IMR-90 (cell line): ENCODE measurements at regions of chr7 and their contacts with region 1.

Region 1: DNA sequence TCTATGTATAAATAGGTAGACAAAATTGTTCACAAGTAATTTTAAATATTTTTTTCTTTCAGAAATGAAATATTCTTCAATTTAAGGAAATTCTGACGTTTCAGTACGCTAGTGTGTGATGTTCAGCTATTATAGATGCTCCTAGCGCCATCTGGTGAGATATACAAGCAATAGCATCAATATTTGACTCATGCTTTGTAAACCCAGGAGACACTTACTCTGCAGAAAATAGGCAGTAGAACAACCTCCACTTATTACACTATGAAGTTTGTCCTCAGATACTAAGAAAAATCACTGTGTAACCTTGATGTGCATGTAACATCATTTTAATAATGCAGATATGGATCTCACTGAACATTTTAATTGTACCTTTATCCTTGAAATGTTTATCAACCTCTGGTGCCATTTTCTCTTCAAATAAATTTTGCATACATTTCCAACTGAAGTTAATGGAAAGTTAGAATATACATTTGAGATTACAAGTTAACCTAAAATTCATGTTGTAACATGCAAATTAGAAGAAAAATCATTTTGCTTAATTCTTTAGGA is 151.5 kb upstream of the FAM3C start:
- DNase-seq: peak; percentile 78
- ATAC-seq: peak; percentile 88
- H3K4me3 ChIP-seq: no peak overlapping the region
- H3K27ac ChIP-seq: no peak overlapping the region
- H3K4me1 ChIP-seq: 0 out of 2 replicates have a peak, but pooled peaks cover 3% of the 10 kb centered on the region
- H3K27me3 ChIP-seq: peaks cover 4% of the 10 kb centered on the region
- CTCF ChIP-seq: peak; percentile 91
- POLR2A ChIP-seq: no peak
- RAD21 ChIP-seq: peak; percentile 88

Region 2: GRCh38 chr7:121126801-121127534 is 420.6 kb before region 1 on chr7:
- CTCF ChIA-PET with region 1: no interaction called
- POLR2A ChIA-PET with region 1: no interaction called
- dilution Hi-C with region 1: no loop called
- in situ Hi-C with region 1: loop called (anchors 10 kb)
- intact Hi-C with region 1: loop called (anchors 5 kb)
- DNase-seq: peak; percentile 27
- ATAC-seq: no peak
- H3K4me3 ChIP-seq: no peak overlapping the region
- H3K27ac ChIP-seq: no peak overlapping the region
- H3K4me1 ChIP-seq: no peaks in the 10 kb centered on the region
- H3K27me3 ChIP-seq: no peaks in the 10 kb centered on the region
- CTCF ChIP-seq: 0 out of 2 replicates have a peak, but pooled peaks have one; percentile 33
- POLR2A ChIP-seq: no peak
- RAD21 ChIP-seq: peak; percentile 42

Region 3: DNA sequence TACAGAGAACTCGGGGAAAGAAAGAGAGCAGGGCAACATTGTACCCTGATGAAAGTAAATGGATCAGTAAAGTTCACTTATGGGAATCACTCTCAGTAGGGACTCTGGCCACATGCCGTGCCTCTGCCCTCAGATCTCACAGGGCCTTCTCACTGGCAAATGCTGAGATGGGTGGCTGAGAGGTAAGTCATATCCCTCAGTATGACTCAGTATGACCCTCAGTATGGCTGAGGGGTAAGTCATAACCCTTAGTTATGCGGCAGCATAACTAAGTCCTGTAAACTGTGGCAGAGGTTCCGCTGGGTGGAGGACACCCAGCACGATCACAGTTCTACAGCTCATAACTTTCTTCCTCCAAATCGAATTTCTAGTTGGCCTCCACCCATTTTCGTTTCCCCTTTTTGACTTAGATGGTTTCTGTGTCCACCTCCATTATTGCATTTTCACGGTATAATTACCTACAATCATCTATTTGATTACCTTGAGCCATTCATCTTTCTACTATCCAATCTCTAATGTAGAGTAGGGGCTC is 245.3 kb before region 1 on chr7:
- CTCF ChIA-PET with region 1: no interaction called
- POLR2A ChIA-PET with region 1: no interaction called
- dilution Hi-C with region 1: no loop called
- in situ Hi-C with region 1: no loop called
- intact Hi-C with region 1: no loop called
- DNase-seq: peak; percentile 89
- ATAC-seq: peak; percentile 81
- H3K4me3 ChIP-seq: no peak overlapping the region
- H3K27ac ChIP-seq: peak overlapping the region; percentile 84; the same call in 1 of the 2 replicates
- H3K4me1 ChIP-seq: peaks cover 12% of the 10 kb centered on the region
- H3K27me3 ChIP-seq: no peaks in the 10 kb centered on the region
- CTCF ChIP-seq: no peak
- POLR2A ChIP-seq: peak; percentile 58; the same call in 1 of the 2 replicates
- RAD21 ChIP-seq: no peak

Region 4: GRCh38 chr7:121366852-121367431 is 180.7 kb before region 1 on chr7:
- CTCF ChIA-PET with region 1: interaction called, 6 read pairs
- POLR2A ChIA-PET with region 1: interaction called, 3 read pairs
- dilution Hi-C with region 1: loop called (anchors 25 kb)
- in situ Hi-C with region 1: loop called (anchors 5 kb)
- intact Hi-C with region 1: loop called (anchors 1 kb)
- DNase-seq: peak; percentile 48
- ATAC-seq: no peak; the same call in 1 of the 2 replicates
- H3K4me3 ChIP-seq: no peak overlapping the region
- H3K27ac ChIP-seq: no peak overlapping the region
- H3K4me1 ChIP-seq: peaks cover 5% of the 10 kb centered on the region
- H3K27me3 ChIP-seq: no peaks in the 10 kb centered on the region
- CTCF ChIP-seq: peak; percentile 83
- POLR2A ChIP-seq: no peak
- RAD21 ChIP-seq: peak; percentile 74

Region 5: GRCh38 chr7:121428855-121429489 is 118.6 kb before region 1 on chr7:
- CTCF ChIA-PET with region 1: no interaction called
- POLR2A ChIA-PET with region 1: no interaction called
- dilution Hi-C with region 1: no loop called
- in situ Hi-C with region 1: no loop called
- intact Hi-C with region 1: loop called (anchors 5 kb)
- DNase-seq: peak; percentile 10
- ATAC-seq: peak; percentile 89
- H3K4me3 ChIP-seq: no peak overlapping the region
- H3K27ac ChIP-seq: no peak overlapping the region
- H3K4me1 ChIP-seq: peaks cover 2% of the 10 kb centered on the region; the same call in 1 of the 2 replicates
- H3K27me3 ChIP-seq: peaks cover 2% of the 10 kb centered on the region
- CTCF ChIP-seq: no peak
- POLR2A ChIP-seq: no peak
- RAD21 ChIP-seq: no peak

Region 6: DNA sequence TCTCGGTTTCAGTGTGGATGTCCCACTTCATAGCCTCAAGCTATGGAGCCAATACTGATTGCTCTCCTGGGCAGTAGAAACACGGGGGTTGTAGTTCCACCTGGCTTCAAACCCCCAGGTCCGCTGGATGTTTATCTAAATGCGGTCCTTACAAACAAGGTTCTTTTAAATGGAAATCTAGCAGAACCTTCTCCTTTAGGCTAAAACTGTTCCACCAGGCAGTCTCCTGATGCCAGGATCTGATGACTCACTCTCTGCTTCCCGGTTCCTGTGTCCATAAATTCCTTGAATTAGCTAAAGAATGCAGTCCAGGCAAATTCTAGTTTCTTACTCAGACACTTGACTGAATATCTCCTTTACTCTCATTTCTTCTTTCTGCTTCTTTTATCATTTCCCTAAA is 43.1 kb before region 1 on chr7:
- CTCF ChIA-PET with region 1: no interaction called
- POLR2A ChIA-PET with region 1: no interaction called
- dilution Hi-C with region 1: no loop called
- in situ Hi-C with region 1: no loop called
- intact Hi-C with region 1: no loop called
- DNase-seq: peak; percentile 76
- ATAC-seq: peak; percentile 94
- H3K4me3 ChIP-seq: no peak overlapping the region
- H3K27ac ChIP-seq: peak overlapping the region; percentile 55
- H3K4me1 ChIP-seq: peaks cover 2% of the 10 kb centered on the region; the same call in 1 of the 2 replicates
- H3K27me3 ChIP-seq: no peaks in the 10 kb centered on the region
- CTCF ChIP-seq: no peak
- POLR2A ChIP-seq: no peak
- RAD21 ChIP-seq: no peak

Region 7: GRCh38 chr7:121530227-121531174 is 17.1 kb before region 1 on chr7:
- CTCF ChIA-PET with region 1: no interaction called
- POLR2A ChIA-PET with region 1: no interaction called
- dilution Hi-C with region 1: no loop called
- in situ Hi-C with region 1: no loop called
- intact Hi-C with region 1: loop called (anchors 1 kb)
- DNase-seq: peak; percentile 81
- ATAC-seq: peak; percentile 85
- H3K4me3 ChIP-seq: no peak overlapping the region
- H3K27ac ChIP-seq: no peak overlapping the region
- H3K4me1 ChIP-seq: no peaks in the 10 kb centered on the region; the same call in 1 of the 2 replicates
- H3K27me3 ChIP-seq: peaks cover 3% of the 10 kb centered on the region; the same call in 1 of the 2 replicates
- CTCF ChIP-seq: no peak
- POLR2A ChIP-seq: no peak
- RAD21 ChIP-seq: no peak

Region 8: GRCh38 chr7:121608785-121609184 is 61.2 kb after region 1 on chr7:
- CTCF ChIA-PET with region 1: no interaction called
- POLR2A ChIA-PET with region 1: no interaction called
- dilution Hi-C with region 1: no loop called
- in situ Hi-C with region 1: no loop called
- intact Hi-C with region 1: no loop called
- DNase-seq: no peak
- ATAC-seq: no peak
- H3K4me3 ChIP-seq: no peak overlapping the region
- H3K27ac ChIP-seq: no peak overlapping the region
- H3K4me1 ChIP-seq: no peaks in the 10 kb centered on the region
- H3K27me3 ChIP-seq: peaks cover 4% of the 10 kb centered on the region
- CTCF ChIP-seq: no peak
- POLR2A ChIP-seq: no peak
- RAD21 ChIP-seq: no peak